MCF 10A (cell line): ENCODE measurements at regions of chr19 and their contacts with region 1.

Region 1: GRCh38 chr19:38402967-38403861 is at the start of gene FAM98C:
- DNase-seq: peak; percentile 98
- H3K4me3 Mint-ChIP-seq: peak within 1 kb of the TSS; percentile 90
- H3K27ac Mint-ChIP-seq: peak within 1 kb of the TSS; percentile 95
- H3K4me1 Mint-ChIP-seq: no peaks in the 10 kb centered on the region
- H3K27me3 Mint-ChIP-seq: no peaks in the 10 kb centered on the region
- CTCF ChIP-seq: peak; percentile 96
- total RNA-seq, gene FAM98C: 18.8 and 19.9 TPM in 2 replicates

Region 2: GRCh38 chr19:38245826-38246498 is 157.3 kb before region 1 on chr19:
- CTCF ChIA-PET with region 1: interaction called, 4 read pairs
- POLR2A ChIA-PET with region 1: no interaction called
- intact Hi-C with region 1: loop called (anchors 10 kb)
- DNase-seq: no peak
- H3K4me3 Mint-ChIP-seq: no peak overlapping the region
- H3K27ac Mint-ChIP-seq: no peak overlapping the region
- H3K4me1 Mint-ChIP-seq: peaks cover 16% of the 10 kb centered on the region
- H3K27me3 Mint-ChIP-seq: no peaks in the 10 kb centered on the region
- CTCF ChIP-seq: no peak

Region 3: GRCh38 chr19:38387550-38388348 is 15.5 kb before region 1 on chr19 and contains the start of gene GGN:
- CTCF ChIA-PET with region 1: interaction called, 10 read pairs
- POLR2A ChIA-PET with region 1: interaction called, 14 read pairs
- intact Hi-C with region 1: loop called (anchors 1 kb)
- DNase-seq: peak; percentile 97
- H3K4me3 Mint-ChIP-seq: peak within 1 kb of the TSS; percentile 86
- H3K27ac Mint-ChIP-seq: no peak within 1 kb of the TSS
- H3K4me1 Mint-ChIP-seq: peaks cover 16% of the 10 kb centered on the region
- H3K27me3 Mint-ChIP-seq: no peaks in the 10 kb centered on the region
- CTCF ChIP-seq: no peak
- total RNA-seq, gene GGN: 0.27 and 1.4 TPM in 2 replicates

Region 4: GRCh38 chr19:38634757-38635482 is 231.7 kb after region 1 on chr19:
- CTCF ChIA-PET with region 1: interaction called, 6 read pairs
- POLR2A ChIA-PET with region 1: interaction called, 5 read pairs
- intact Hi-C with region 1: loop called (anchors 1 kb)
- DNase-seq: peak; percentile 80
- H3K4me3 Mint-ChIP-seq: no peak overlapping the region
- H3K27ac Mint-ChIP-seq: peak overlapping the region; percentile 24
- H3K4me1 Mint-ChIP-seq: peaks cover 17% of the 10 kb centered on the region
- H3K27me3 Mint-ChIP-seq: no peaks in the 10 kb centered on the region
- CTCF ChIP-seq: peak; percentile 91

Region 5: DNA sequence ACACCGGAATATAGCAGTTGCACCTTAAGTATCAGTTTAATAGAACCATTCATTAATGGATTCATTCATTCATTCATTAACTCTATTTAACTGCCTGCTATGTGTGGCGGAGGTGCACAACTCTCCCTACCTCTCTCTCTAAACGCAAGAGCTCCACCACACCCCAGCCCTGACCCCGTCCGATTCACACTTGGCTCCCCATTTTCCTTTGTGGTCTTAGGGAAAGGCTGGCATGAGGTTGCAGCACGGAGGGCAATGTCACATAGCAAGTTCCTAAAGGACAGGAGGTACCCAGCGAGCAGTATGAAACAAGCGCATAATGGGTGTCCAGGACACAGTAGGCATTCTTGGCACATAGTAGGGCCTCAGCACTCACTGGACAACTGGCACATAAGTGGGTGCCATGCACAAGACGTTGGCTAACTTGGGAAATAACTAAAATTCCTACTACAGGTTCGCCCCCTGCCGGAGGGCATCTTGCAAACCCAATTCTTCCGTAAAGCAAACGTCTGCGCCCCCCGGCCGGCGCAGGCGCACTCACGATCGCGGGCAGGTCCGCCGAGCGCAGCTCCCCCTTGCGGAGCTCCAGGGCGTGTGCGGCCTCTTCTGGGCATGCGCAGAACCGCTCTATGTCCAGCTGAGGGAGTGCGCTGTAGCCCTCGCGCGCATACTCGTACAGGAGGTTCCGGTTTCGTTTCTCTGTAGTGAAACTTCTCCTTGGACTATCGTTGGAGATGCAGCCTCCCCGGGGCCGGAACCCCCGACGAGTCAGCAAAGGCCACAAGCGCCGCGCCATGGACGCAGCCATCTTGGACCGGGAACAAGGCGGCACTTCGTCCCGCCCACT is 526.9 kb after region 1 on chr19 and contains the start of gene SARS2:
- CTCF ChIA-PET with region 1: interaction called, 7 read pairs
- POLR2A ChIA-PET with region 1: interaction called, 14 read pairs
- intact Hi-C with region 1: loop called (anchors 1 kb)
- DNase-seq: peak; percentile 93
- H3K4me3 Mint-ChIP-seq: peak within 1 kb of the TSS; percentile 85
- H3K27ac Mint-ChIP-seq: peak within 1 kb of the TSS; percentile 95
- H3K4me1 Mint-ChIP-seq: peaks cover 14% of the 10 kb centered on the region
- H3K27me3 Mint-ChIP-seq: no peaks in the 10 kb centered on the region
- CTCF ChIP-seq: peak; percentile 95
- total RNA-seq, gene SARS2: 9.3 and 23.6 TPM in 2 replicates